Natural killer cell (primary cell): ENCODE measurements at regions of chr16 and their contacts with region 1.

Region 1: GRCh38 chr16:17013038-17013437 is 457.7 kb downstream of the XYLT1 start:
- DNase-seq: no peak
- ATAC-seq: no peak
- H3K4me3 ChIP-seq: no peak overlapping the region
- H3K4me3 Mint-ChIP-seq: peak overlapping the region; percentile 82
- H3K27ac ChIP-seq: peak overlapping the region; percentile 87
- H3K27ac Mint-ChIP-seq: peak overlapping the region; percentile 92 to 96
- H3K4me1 ChIP-seq: peaks cover 17% of the 10 kb centered on the region
- H3K4me1 Mint-ChIP-seq: peaks cover 11 to 16% of the 10 kb centered on the region in 2 donors
- H3K27me3 ChIP-seq: no peaks in the 10 kb centered on the region
- H3K27me3 Mint-ChIP-seq: no peaks in the 10 kb centered on the region
- CTCF ChIP-seq: no peak

Region 2: DNA sequence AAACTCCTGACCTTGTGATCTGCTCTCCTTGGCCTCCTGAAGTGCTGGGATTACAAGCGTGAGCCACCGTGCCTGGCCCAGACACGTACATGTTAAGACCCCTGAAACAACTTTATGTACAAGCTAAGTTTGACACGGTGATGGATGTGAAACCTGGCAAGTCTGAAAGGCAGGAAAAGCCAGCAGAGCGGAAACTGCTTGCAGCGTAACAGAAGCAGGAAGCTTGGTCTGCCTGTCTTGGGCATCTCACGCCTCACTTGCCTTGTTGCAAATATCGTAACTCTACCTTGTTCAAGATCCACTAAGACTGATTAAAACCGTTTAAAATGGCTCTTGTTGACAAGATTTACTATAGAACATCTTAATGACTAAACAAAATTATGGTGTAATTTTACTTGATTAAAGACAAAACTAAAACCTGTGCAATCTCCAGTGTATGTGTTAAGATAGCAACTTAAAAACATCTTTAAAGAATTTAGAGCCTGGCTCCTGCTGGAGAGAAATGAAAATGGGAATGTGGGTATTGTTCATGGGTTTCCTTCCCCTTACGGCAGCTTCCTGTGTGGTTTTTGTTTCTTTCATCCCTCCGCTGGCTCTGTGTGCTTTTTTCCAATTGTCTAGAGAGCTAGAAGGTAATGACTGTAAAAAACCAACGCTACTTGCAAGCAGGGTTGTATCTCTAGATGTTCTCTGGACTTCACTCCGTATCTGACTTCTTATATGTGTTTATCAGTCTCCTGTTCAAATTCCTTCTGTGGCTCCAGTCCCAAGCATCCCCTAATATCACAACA is 19.9 kb before region 1 on chr16:
- intact Hi-C with region 1: loop called (anchors 2 kb)
- DNase-seq: peak; percentile 23 to 54
- ATAC-seq: peak; percentile 61 to 86 (median 82)
- H3K4me3 ChIP-seq: no peak overlapping the region
- H3K4me3 Mint-ChIP-seq: peak overlapping the region; percentile 77
- H3K27ac ChIP-seq: peak overlapping the region; percentile 21
- H3K27ac Mint-ChIP-seq: peak overlapping the region; percentile 23 to 62
- H3K4me1 ChIP-seq: peaks cover 16% of the 10 kb centered on the region
- H3K4me1 Mint-ChIP-seq: peaks cover 17 to 26% of the 10 kb centered on the region in 2 donors
- H3K27me3 ChIP-seq: no peaks in the 10 kb centered on the region
- H3K27me3 Mint-ChIP-seq: peaks cover 0 to 5% of the 10 kb centered on the region in 2 donors
- CTCF ChIP-seq: no peak

Region 3: GRCh38 chr16:17070882-17071592 is 58.0 kb after region 1 on chr16:
- intact Hi-C with region 1: loop called (anchors 2 kb)
- DNase-seq: peak; percentile 57 to 96
- ATAC-seq: peak; percentile 71 to 92 (median 84)
- H3K4me3 ChIP-seq: peak overlapping the region; percentile 17
- H3K4me3 Mint-ChIP-seq: peak overlapping the region; percentile 88
- H3K27ac ChIP-seq: peak overlapping the region; percentile 50
- H3K27ac Mint-ChIP-seq: peak overlapping the region; percentile 78 to 96
- H3K4me1 ChIP-seq: peaks cover 14% of the 10 kb centered on the region
- H3K4me1 Mint-ChIP-seq: peaks cover 9 to 13% of the 10 kb centered on the region in 2 donors
- H3K27me3 ChIP-seq: no peaks in the 10 kb centered on the region
- H3K27me3 Mint-ChIP-seq: peaks cover 0 to 4% of the 10 kb centered on the region in 2 donors
- CTCF ChIP-seq: no peak